ENCODE measurements at regions of chr2 and their contacts with region 1.

Region 1: DNA sequence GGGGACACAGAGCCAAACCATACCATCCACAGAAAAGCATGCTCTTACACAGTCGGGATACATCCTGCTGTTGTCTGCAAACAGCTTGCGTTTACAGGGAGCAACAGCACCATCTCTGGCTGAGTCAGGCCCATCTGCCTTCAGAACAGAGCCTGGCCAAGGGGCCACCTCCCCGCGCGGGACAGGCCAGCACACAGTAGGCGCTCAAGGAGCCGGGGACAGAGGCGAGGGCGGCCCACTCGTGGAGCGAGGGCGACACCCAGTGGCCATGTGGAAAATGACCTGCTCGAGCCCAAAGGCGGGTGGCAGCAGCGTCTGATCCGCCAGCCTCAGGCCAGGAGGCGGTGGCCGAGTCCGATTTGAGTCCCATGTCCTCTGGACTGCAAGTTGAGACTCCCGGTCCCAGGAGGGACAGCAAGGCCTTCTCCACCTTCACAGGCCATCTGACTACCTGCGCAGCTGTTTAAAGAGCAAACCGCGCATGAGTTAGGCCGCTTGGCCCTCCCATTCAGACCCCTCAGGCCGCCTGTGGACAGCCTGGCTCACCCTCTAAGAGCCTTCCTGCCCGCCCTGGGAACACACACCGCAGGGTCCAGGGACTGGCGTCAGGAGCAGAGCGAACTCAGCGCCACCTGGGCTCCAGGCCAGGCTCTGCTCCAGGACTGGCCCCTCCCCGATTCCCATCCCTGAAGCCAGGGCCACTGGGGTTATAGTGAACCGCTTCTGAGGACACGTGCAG is 38.3 kb downstream of the TTC32 start:
- DNase-seq: peak; percentile 68
- H3K4me3 ChIP-seq: peak overlapping the region in 2 of 4 donors; percentile 7 to 8
- H3K27ac ChIP-seq: no peak overlapping the region
- H3K4me1 ChIP-seq: peaks cover 1 to 10% (median 3%) of the 10 kb centered on the region in 4 donors
- H3K27me3 ChIP-seq: peaks cover under 1% of the 10 kb centered on the region
- CTCF ChIP-seq: peak; percentile 95 to 97 (median 96)
- EP300 ChIP-seq: no peak
- POLR2A ChIP-seq: no peak

Region 2: GRCh38 chr2:18435421-18436037 is 1427.9 kb before region 1 on chr2:
- in situ Hi-C with region 1: loop called in 1 of 4 experiments (anchors 25 kb)
- intact Hi-C with region 1: no loop called
- DNase-seq: no peak
- H3K4me3 ChIP-seq: no peak overlapping the region
- H3K27ac ChIP-seq: peak overlapping the region in 1 of 4 donors; percentile 7
- H3K4me1 ChIP-seq: peaks cover 0 to 8% (median 0%) of the 10 kb centered on the region in 4 donors
- H3K27me3 ChIP-seq: no peaks in the 10 kb centered on the region
- CTCF ChIP-seq: peak; percentile 41 to 57 (median 48)
- EP300 ChIP-seq: no peak
- POLR2A ChIP-seq: no peak

Region 3: DNA sequence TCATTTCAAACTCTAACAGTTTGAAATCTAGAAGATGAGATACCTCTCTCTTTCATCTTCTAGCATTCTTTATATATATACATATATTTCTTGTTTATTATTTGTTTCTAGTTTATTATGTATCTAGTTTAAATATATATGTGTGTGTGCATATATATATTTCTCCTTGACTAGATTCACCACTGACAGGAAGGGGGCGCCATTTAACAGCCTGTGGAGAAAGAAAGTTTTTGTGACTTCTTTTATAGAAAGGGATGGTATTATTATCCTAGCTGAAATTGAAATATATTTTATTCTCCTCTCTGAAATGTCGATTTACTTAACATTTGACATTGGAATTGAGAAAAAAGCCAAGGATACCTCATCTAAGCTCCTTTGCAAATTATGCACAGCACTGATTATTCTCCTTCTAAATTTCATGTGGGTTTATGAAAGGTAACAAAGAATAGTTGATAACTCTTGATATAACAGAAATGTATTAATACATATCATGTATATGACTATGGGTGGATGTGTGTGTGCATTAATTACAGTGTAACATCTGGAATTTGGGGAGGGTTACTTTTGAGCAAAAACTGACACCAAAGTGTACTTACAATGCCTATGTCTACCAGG is 1113.5 kb before region 1 on chr2:
- in situ Hi-C with region 1: loop called (anchors 10 to 25 kb)
- intact Hi-C with region 1: loop called (anchors 5 kb)
- DNase-seq: peak; percentile 49
- H3K4me3 ChIP-seq: no peak overlapping the region
- H3K27ac ChIP-seq: no peak overlapping the region
- H3K4me1 ChIP-seq: peaks cover 0 to 15% (median 5%) of the 10 kb centered on the region in 4 donors
- H3K27me3 ChIP-seq: no peaks in the 10 kb centered on the region
- CTCF ChIP-seq: peak; percentile 69 to 82 (median 74)
- EP300 ChIP-seq: no peak
- POLR2A ChIP-seq: no peak

Region 4: DNA sequence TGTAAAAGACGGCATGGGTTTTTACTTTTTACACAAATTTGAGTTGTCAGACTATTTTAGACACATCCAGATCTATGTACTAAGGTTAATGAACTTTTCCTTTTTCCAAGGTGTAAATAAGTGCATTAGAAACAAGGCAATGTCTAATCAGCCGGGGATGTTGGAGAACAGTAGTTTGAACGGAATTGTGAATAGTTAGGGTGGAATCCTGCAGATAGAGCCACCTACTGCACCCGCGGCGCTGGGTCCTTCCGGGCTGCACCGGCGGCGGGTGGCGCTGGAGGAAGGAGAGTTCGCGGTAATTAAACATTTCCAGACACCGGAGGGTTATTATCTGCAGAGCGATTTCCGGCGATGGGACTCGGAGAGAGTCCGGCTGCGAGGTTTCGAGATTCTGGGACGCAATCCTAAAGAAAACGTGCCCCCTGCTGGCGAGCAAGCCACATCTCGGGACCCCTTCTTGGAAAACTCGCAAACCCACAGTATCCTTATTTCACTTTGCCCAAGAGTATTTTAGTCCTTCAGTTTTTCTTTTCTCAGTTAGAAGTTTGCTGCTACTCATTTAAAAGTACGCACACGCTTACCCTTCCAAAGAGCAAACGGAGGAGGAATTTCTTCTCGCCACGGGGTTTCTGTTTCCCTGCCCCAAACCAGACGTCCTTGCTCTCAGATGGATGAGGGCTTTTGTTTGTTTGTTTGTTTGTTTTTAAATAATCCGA is 500.6 kb before region 1 on chr2:
- in situ Hi-C with region 1: loop called in 3 of 4 experiments (anchors 10 kb)
- intact Hi-C with region 1: loop called (anchors 5 kb)
- DNase-seq: peak; percentile 84
- H3K4me3 ChIP-seq: peak overlapping the region; percentile 26 to 60 (median 46)
- H3K27ac ChIP-seq: peak overlapping the region; percentile 66 to 89 (median 70)
- H3K4me1 ChIP-seq: peaks cover 0 to 33% (median 21%) of the 10 kb centered on the region in 4 donors
- H3K27me3 ChIP-seq: peaks cover 58% of the 10 kb centered on the region
- CTCF ChIP-seq: peak; percentile 72 to 79 (median 77)
- EP300 ChIP-seq: no peak
- POLR2A ChIP-seq: no peak

Measured in transverse colon (tissue), 4 donors.